ENCODE measurements at regions of chr14 and their contacts with region 1.

Region 1: GRCh38 chr14:66507722-66508546 is at the start of gene GPHN:
- DNase-seq: peak; percentile 75
- ATAC-seq: peak; percentile 85
- H3K4me3 Mint-ChIP-seq: peak within 1 kb of the TSS; percentile 97
- H3K27ac Mint-ChIP-seq: peak within 1 kb of the TSS; percentile 86
- H3K4me1 Mint-ChIP-seq: peaks cover 23% of the 10 kb centered on the region
- H3K27me3 Mint-ChIP-seq: peaks cover 6% of the 10 kb centered on the region
- CTCF ChIP-seq: no peak
- total RNA-seq, gene GPHN: 36.9 and 40.8 TPM in 2 replicates

Region 2: DNA sequence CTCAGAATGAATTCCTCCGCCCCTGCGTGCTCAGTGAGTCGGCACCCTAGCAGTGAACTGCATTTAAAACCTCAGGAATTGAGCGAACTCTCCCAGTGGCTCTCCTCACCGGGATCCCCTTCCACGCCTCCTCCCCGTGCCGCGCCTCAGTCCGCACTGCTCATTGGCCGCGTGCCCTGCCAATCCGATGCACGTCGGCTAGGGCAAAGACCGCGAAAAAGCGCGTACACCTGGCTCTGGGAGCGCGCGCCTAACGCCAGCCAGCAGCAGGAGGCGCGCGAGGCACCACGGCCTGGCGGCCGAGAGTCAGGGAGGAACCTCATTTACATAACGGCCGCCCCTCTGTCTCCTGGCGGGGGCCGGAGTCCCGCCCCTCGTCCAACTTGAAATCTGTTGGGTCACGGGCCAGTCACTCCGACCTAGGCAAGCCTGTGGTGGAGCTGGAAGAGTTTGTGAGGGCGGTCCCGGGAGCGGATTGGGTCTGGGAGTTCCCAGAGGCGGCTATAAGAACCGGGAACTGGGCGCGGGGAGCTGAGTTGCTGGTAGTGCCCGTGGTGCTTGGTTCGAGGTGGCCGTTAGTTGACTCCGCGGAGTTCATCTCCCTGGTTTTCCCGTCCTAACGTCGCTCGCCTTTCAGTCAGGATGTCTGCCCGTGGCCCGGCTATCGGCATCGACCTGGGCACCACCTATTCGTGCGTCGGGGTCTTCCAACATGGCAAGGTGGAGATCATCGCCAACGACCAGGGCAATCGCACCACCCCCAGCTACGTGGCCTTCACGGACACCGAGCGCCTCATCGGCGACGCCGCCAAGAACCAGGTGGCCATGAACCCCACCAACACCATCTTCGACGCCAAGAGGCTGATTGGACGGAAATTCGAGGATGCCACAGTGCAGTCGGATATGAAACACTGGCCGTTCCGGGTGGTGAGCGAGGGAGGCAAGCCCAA is 1967.5 kb before region 1 on chr14 and contains the start of gene HSPA2:
- CTCF ChIA-PET with region 1: no interaction called
- POLR2A ChIA-PET with region 1: no interaction called
- intact Hi-C with region 1: loop called (anchors 5 kb)
- DNase-seq: peak; percentile 93
- ATAC-seq: peak; percentile 90
- H3K4me3 Mint-ChIP-seq: peak within 1 kb of the TSS; percentile 100
- H3K27ac Mint-ChIP-seq: peak within 1 kb of the TSS; percentile 96
- H3K4me1 Mint-ChIP-seq: peaks cover 33% of the 10 kb centered on the region
- H3K27me3 Mint-ChIP-seq: peaks cover 2% of the 10 kb centered on the region
- CTCF ChIP-seq: no peak
- total RNA-seq, gene HSPA2: 3.8 and 5.4 TPM in 2 replicates

Region 3: DNA sequence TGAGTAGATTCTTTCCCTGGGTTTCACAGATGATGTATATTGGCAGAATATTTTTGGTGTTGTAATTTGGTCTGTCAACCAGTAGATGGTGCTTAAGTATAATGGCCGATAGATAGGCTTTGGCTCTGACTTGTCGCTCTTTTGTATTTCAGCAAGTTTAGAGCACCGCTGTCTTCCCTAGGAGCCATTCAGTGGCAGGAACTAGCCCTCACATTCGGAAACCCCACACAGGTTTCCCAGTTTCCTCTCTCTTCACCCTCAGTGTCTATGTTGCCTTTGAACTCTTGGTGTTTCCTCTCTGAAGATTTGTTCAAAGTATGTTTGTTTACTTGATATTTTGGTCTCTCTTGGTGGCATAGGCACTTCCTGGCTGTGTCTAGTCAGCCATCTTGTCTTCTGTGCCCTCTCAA is 102.2 kb after region 1 on chr14:
- CTCF ChIA-PET with region 1: no interaction called
- POLR2A ChIA-PET with region 1: no interaction called
- intact Hi-C with region 1: loop called (anchors 5 kb)
- DNase-seq: no peak
- ATAC-seq: no peak
- H3K4me3 Mint-ChIP-seq: no peak overlapping the region
- H3K27ac Mint-ChIP-seq: no peak overlapping the region
- H3K4me1 Mint-ChIP-seq: no peaks in the 10 kb centered on the region
- H3K27me3 Mint-ChIP-seq: no peaks in the 10 kb centered on the region
- CTCF ChIP-seq: no peak

Region 4: GRCh38 chr14:66850258-66850888 is 342.4 kb after region 1 on chr14:
- CTCF ChIA-PET with region 1: no interaction called
- POLR2A ChIA-PET with region 1: no interaction called
- intact Hi-C with region 1: loop called (anchors 5 kb)
- DNase-seq: no peak
- ATAC-seq: peak; percentile 71
- H3K4me3 Mint-ChIP-seq: peak overlapping the region; percentile 8
- H3K27ac Mint-ChIP-seq: peak overlapping the region; percentile 51
- H3K4me1 Mint-ChIP-seq: peaks cover 30% of the 10 kb centered on the region
- H3K27me3 Mint-ChIP-seq: no peaks in the 10 kb centered on the region
- CTCF ChIP-seq: no peak

Region 5: GRCh38 chr14:67240978-67241414 is 733.1 kb after region 1 on chr14:
- CTCF ChIA-PET with region 1: no interaction called
- POLR2A ChIA-PET with region 1: no interaction called
- intact Hi-C with region 1: loop called (anchors 1 kb)
- DNase-seq: peak; percentile 91
- ATAC-seq: peak; percentile 94
- H3K4me3 Mint-ChIP-seq: peak overlapping the region; percentile 93
- H3K27ac Mint-ChIP-seq: peak overlapping the region; percentile 81
- H3K4me1 Mint-ChIP-seq: peaks cover 16% of the 10 kb centered on the region
- H3K27me3 Mint-ChIP-seq: no peaks in the 10 kb centered on the region
- CTCF ChIP-seq: no peak

Region 6: DNA sequence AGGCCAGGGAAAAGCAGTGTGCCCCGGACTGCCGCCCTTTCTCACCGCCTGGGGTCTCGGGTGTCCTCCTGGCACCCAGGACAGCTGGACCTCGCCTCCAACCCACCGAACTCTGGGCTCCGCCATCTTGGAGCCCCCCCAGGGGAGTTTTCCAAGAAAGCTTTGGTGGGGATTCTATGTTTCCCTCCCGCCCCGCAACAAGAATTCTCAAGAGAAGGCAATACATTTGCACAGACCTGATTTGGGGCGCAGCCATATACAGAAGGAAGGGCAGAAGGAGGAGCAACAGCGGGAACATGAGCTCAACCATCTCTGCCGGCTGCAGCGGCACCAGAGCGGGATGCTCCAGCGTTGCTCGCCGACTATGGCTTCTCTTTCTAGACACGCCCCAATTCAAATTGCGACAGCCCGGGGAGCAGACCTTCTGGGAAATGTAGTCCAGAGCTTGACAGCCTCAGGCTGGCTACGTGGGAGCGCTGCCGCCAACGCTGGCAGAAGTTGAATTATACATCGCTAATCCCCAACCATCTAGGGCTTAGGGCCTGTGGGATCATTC is 1187.5 kb after region 1 on chr14 and contains the start of gene RDH11:
- CTCF ChIA-PET with region 1: no interaction called
- POLR2A ChIA-PET with region 1: no interaction called
- intact Hi-C with region 1: loop called (anchors 1 kb)
- DNase-seq: peak; percentile 59
- ATAC-seq: peak; percentile 94
- H3K4me3 Mint-ChIP-seq: peak within 1 kb of the TSS; percentile 89
- H3K27ac Mint-ChIP-seq: peak within 1 kb of the TSS; percentile 88
- H3K4me1 Mint-ChIP-seq: peaks cover 13% of the 10 kb centered on the region
- H3K27me3 Mint-ChIP-seq: no peaks in the 10 kb centered on the region
- CTCF ChIP-seq: no peak
- total RNA-seq, gene RDH11: 33.0 and 34.7 TPM in 2 replicates